RWPE1 (cell line): ENCODE measurements at regions of chr17 and their contacts with region 1.

Region 1: DNA sequence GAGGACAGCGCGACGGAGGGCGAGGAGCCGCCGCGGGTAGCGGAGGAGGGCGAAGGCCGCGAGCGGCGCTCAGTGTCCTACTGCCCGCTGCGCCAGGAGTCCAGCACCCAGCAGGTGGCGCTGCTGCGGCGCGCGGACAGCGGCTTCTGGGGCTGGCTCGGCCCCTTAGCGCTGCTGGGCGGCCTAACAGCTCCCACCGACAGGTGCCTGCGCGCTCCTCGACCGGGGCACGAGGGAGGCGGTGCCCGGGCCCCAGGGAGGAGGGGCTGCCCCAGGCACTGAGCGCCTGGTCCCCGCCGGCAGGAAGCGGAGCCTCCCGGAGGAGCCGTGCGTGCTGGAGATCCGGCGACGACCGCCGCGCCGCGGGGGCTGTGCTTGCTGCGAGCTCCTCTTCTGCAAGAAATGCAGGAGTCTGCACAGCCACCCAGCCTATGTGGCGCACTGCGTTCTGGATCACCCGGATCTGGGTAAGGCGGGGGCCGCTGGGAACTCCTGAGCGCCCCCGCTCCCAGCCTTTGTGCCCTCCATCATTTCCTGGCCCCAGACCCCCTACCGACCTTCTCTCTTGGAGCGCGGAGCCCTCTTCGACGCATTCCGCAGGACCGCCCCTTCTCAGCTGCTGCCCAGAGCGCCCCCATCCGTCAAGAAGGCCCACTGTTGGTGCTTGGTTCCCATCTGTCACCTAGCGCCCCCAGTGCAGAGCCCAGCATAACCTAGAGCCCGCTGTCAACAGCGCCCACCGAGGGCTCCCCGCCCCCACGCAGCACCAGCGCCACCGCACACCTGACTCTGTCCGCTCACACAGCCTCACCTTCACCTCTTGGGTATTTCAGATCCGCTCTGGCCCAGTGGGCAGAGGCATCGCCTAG is 3.7 kb downstream of the C17orf50 start:
- DNase-seq: peak; percentile 91
- H3K27ac ChIP-seq: peak overlapping the region; percentile 37
- CTCF ChIP-seq: peak; percentile 93

Region 2: DNA sequence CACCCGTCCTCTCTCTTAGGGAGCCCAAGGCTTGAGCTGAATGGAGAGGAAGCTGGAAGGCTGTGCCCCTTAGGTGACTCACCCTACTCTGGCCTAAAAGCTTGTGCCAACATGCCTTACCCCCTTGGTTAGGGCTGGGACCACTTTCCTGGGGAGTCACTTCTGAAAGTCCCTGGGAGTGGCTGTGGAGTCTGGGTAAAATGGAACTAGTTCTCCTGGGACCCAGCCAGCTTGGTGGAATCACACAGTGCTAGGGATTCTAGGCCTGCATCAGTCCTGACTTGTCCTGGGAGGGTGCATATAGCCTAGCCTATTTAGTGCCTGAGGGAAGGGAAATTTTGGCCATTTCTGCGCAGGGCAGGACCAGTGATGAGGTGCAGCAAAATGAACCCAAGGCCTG is 20.5 kb after region 1 on chr17:
- CTCF ChIA-PET with region 1: interaction called, 15 read pairs
- POLR2A ChIA-PET with region 1: no interaction called
- DNase-seq: peak; percentile 98
- H3K27ac ChIP-seq: peak overlapping the region; percentile 98
- CTCF ChIP-seq: no peak

Region 3: GRCh38 chr17:35794988-35795824 is 30.8 kb after region 1 on chr17 and contains the start of gene MMP28:
- CTCF ChIA-PET with region 1: interaction called, 22 read pairs
- POLR2A ChIA-PET with region 1: no interaction called
- DNase-seq: peak; percentile 76
- H3K27ac ChIP-seq: peak within 1 kb of the TSS; percentile 94
- CTCF ChIP-seq: no peak

Region 4: GRCh38 chr17:35808962-35809854 is 44.9 kb after region 1 on chr17 and contains the start of gene TAF15:
- CTCF ChIA-PET with region 1: interaction called, 71 read pairs
- POLR2A ChIA-PET with region 1: interaction called, 4 read pairs
- DNase-seq: peak; percentile 96
- H3K27ac ChIP-seq: peak within 1 kb of the TSS; percentile 93
- CTCF ChIP-seq: peak; percentile 88